HCT116 (cell line): ENCODE measurements at regions of chr6 and their contacts with region 1.

Region 1: DNA sequence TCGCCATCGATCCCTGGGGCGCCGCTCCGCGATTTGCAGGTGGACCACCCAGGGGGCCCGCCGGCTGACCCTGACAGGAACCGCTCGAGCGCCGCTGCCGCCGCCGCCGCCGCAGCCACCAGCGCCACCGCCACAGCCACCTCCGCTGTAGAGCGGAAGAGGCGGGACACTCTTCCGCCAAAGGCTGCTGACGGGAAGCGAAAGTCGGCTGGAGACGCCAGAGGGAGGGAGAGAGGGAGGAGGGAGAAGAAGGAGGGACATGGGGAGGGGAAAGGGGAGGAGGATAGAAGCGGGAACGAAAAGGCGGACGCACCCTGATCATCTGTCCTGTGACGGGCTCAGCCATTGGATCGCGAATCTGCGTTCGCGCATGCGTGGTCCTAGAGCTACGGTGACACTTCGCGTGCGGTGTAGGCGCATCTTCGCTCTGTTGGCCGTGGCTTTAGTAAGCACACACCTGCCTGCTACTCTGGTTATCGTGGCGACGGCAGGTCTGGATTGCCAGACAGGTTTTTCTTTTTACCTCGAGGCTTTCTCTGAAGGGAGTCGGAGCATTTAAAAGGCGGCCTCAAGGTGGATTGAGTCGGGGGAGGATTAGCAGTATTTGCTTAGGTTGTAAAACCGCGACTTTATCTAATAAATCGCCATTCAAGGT is at the start of gene TMEM30A:
- DNase-seq: peak; percentile 98
- ATAC-seq: peak; percentile 99
- H3K4me3 ChIP-seq: peak within 1 kb of the TSS; percentile 86 to 98
- H3K27ac ChIP-seq: peak within 1 kb of the TSS; percentile 58
- H3K4me1 ChIP-seq: peaks cover 6 to 19% of the 10 kb centered on the region in 2 experiments; a peak in 3 of 4 replicates
- H3K27me3 ChIP-seq: no peaks in the 10 kb centered on the region
- CTCF ChIP-seq: no peak
- POLR2A ChIP-seq: peak; percentile 93
- RAD21 ChIP-seq: no peak
- total RNA-seq, gene TMEM30A: 73.4 TPM

Region 2: GRCh38 chr6:75296811-75297779 is 12.3 kb after region 1 on chr6:
- CTCF ChIA-PET with region 1: interaction called, 10 read pairs
- POLR2A ChIA-PET with region 1: interaction called, 3 read pairs
- RAD21 ChIA-PET with region 1: no interaction called
- intact Hi-C with region 1: no loop called
- DNase-seq: peak; percentile 65
- ATAC-seq: peak; percentile 72
- H3K4me3 ChIP-seq: no peak overlapping the region
- H3K27ac ChIP-seq: no peak overlapping the region
- H3K4me1 ChIP-seq: no peaks in the 10 kb centered on the region
- H3K27me3 ChIP-seq: no peaks in the 10 kb centered on the region
- CTCF ChIP-seq: peak; percentile 55 to 75 (median 72)
- POLR2A ChIP-seq: no peak
- RAD21 ChIP-seq: peak; percentile 79